Common myeloid progenitor, CD34-positive (primary cell): ENCODE measurements at regions of chr20 and their contacts with region 1.

Region 1: DNA sequence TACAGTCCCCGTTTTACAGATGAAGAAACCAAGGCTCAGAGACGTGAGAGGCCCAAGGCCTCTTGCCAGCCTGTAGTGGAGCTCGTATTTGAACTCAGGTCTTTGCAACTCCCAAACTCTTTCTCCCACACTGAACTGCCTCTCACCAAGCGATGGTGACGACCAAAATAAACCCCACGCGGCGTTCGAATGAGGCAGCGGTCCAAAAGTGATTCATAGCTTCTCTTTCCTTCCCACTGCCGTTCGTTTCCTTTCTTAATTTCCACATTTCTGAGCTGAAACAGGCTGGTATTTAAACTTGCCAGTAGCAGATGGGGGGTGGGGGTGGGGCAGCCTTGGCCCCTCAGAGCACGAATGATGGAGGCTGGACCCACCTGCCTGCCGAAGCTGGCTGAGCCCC is 252.9 kb upstream of the KCNG1 start:
- DNase-seq: peak in 2 of 3 donors; percentile 3 to 18
- H3K4me3 ChIP-seq: no peak overlapping the region
- H3K27ac ChIP-seq: no peak overlapping the region
- H3K4me1 ChIP-seq: peaks cover 0 to 8% (median 3%) of the 10 kb centered on the region in 4 experiments
- H3K27me3 ChIP-seq: peaks cover 0 to 31% (median 11%) of the 10 kb centered on the region in 5 experiments

Region 2: GRCh38 chr20:51211191-51211590 is 64.6 kb before region 1 on chr20:
- CTCF ChIA-PET with region 1: no interaction called
- POLR2A ChIA-PET with region 1: interaction called, 10 read pairs
- DNase-seq: no peak
- H3K4me3 ChIP-seq: no peak overlapping the region
- H3K27ac ChIP-seq: no peak overlapping the region
- H3K4me1 ChIP-seq: no peaks in the 10 kb centered on the region
- H3K27me3 ChIP-seq: peaks cover 0 to 20% (median 4%) of the 10 kb centered on the region in 5 experiments

Region 3: GRCh38 chr20:51221791-51222408 is 53.9 kb before region 1 on chr20:
- CTCF ChIA-PET with region 1: no interaction called
- POLR2A ChIA-PET with region 1: no interaction called
- DNase-seq: no peak
- H3K4me3 ChIP-seq: no peak overlapping the region
- H3K27ac ChIP-seq: no peak overlapping the region
- H3K4me1 ChIP-seq: peaks cover 0 to 7% (median 3%) of the 10 kb centered on the region in 4 experiments
- H3K27me3 ChIP-seq: peaks cover 2 to 45% (median 12%) of the 10 kb centered on the region in 5 experiments

Region 4: GRCh38 chr20:51233345-51233744 is 42.5 kb before region 1 on chr20:
- CTCF ChIA-PET with region 1: no interaction called
- POLR2A ChIA-PET with region 1: no interaction called
- DNase-seq: no peak
- H3K4me3 ChIP-seq: no peak overlapping the region
- H3K27ac ChIP-seq: no peak overlapping the region
- H3K4me1 ChIP-seq: no peaks in the 10 kb centered on the region
- H3K27me3 ChIP-seq: peaks cover 0 to 21% (median 0%) of the 10 kb centered on the region in 5 experiments